CD14-positive monocyte (primary cell): ENCODE measurements at regions of chr4 and their contacts with region 1.

Region 1: DNA sequence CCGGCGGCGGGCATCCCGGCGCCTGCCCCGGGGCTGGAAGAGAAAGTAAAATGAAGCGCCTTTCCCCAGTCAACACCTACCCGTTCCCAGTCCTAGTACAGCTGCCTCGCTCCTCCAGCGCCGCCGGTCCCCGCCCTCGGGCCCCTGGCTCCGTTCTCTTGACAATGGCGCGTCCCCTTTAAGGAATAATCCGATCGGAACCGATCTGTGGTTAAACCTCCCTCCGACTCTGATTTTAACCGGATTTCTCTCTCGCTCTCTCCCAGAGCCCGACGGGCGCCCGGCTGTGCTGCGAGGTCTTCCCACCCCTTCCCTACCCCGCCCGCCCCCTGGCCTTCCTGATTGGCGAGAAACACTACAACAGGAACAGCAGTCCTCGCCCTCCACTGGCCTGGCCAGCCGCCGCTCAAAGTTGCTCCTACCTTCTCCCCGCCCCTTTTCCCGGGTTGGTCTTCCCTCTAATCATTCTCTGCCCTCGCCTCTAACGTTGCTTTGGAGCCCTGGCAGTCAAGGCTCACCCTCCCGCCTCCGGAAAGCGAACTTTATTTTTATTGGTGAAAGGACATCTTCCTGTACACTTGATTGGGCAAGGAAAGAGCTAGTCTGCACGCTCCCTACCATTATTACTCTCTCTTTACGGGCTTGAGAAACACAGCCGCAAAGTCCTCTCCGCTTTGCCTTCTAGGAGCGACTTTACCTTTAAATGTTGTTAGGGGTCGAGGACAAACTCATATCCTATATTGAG is at the start of gene FRYL:
- DNase-seq: peak; percentile 98 to 100 (median 99)
- H3K4me3 ChIP-seq: peak within 1 kb of the TSS; percentile 97 to 99 (median 99)
- H3K4me3 Mint-ChIP-seq: peak within 1 kb of the TSS; percentile 97 to 98
- H3K27ac ChIP-seq: peak within 1 kb of the TSS; percentile 90 to 97
- H3K27ac Mint-ChIP-seq: peak within 1 kb of the TSS; percentile 92 to 99 (median 97)
- H3K4me1 ChIP-seq: peaks cover 24 to 34% of the 10 kb centered on the region in 2 donors
- H3K4me1 Mint-ChIP-seq: peaks cover 38% of the 10 kb centered on the region
- H3K27me3 ChIP-seq: no peaks in the 10 kb centered on the region
- H3K27me3 Mint-ChIP-seq: no peaks in the 10 kb centered on the region
- CTCF ChIP-seq: no peak
- polyA plus RNA-seq, gene FRYL: 10.8 to 15.8 (median 14.4) TPM

Region 2: DNA sequence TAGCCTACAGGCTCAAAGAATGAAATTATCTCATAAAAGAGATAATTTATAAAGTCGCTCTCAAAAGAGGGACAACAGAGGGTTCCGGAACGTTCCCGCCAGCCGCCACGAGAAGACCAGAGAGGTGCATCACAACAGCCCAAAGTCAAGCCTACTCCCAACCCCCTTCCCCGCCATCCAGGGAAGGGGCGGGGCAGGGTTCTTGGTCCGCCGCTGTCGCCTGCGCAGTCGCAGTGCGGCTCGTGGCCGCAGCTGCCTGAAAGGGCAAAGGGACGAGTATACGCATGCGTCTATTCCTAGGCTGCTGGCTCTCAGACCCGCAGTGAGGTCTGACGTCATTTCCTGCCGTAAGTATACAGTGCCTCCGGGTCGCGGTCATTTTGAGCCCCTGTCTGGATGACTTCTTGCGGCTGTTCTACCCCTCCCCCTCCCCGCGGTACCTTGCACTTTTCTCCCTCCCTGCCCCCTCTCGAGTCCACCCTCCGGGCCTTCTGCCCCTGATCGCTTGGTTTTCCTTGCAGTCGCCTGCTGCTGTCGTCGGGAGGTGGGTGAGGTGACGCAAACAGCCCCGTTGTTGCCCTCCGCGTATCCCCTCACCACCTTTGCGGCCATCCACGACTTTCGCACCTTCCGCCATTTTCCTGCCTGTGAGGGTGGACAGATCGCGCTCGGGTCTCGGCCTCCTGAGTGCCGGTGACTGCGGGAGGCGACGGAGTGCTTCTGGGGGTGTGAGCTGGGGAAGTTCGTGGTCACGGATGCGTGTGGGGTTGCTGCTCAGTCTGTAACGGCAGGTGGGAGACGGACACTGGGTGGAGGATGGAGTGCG is 50.7 kb after region 1 on chr4 and contains the start of gene OCIAD1:
- intact Hi-C with region 1: loop called (anchors 2 kb)
- DNase-seq: peak; percentile 99 to 100 (median 100)
- H3K4me3 ChIP-seq: peak within 1 kb of the TSS; percentile 46 to 92 (median 81)
- H3K4me3 Mint-ChIP-seq: peak within 1 kb of the TSS; percentile 97 to 100
- H3K27ac ChIP-seq: peak within 1 kb of the TSS; percentile 85 to 99
- H3K27ac Mint-ChIP-seq: peak within 1 kb of the TSS; percentile 100
- H3K4me1 ChIP-seq: peaks cover 8 to 19% of the 10 kb centered on the region in 2 donors
- H3K4me1 Mint-ChIP-seq: peaks cover 12% of the 10 kb centered on the region
- H3K27me3 ChIP-seq: peaks cover 0 to 3% of the 10 kb centered on the region in 2 donors
- H3K27me3 Mint-ChIP-seq: peaks cover 2 to 4% (median 2%) of the 10 kb centered on the region in 3 donors
- CTCF ChIP-seq: no peak
- polyA plus RNA-seq, gene OCIAD1: 112 to 145 (median 139) TPM